Psoas muscle (tissue), 8 donors: ENCODE measurements at regions of chr4 and their contacts with region 1.

Region 1: GRCh38 chr4:187204389-187204918 is 480.8 kb upstream of the FAT1 start:
- DNase-seq: no peak
- ATAC-seq: no peak
- H3K4me3 ChIP-seq: no peak overlapping the region
- H3K27ac ChIP-seq: no peak overlapping the region
- H3K4me1 ChIP-seq: no peaks in the 10 kb centered on the region
- H3K27me3 ChIP-seq: no peaks in the 10 kb centered on the region
- CTCF ChIP-seq: no peak

Region 2: DNA sequence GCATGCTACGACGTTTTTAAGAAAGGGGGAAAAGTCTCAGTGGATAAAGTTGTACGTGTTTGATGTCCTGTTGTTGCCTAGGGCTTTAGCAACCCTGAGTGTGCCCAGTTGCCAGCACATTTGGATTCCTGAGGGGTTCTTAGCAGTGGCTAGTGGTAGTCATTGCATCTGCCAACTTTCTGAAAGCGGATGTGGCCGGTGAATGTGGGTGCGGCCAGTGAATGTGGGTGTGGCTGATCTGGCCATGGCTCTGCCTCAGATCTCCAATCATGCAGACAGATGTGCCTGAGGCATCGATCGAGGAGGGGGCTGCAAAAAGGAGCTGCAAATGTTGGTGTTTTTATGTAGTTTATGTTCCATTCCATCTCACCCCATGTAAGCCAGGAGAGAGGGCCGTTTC is 439.3 kb before region 1 on chr4:
- intact Hi-C with region 1: no loop called
- DNase-seq: peak in 1 of 2 donors; percentile 24
- ATAC-seq: no peak
- H3K4me3 ChIP-seq: no peak overlapping the region
- H3K27ac ChIP-seq: no peak overlapping the region
- H3K4me1 ChIP-seq: no peaks in the 10 kb centered on the region
- H3K27me3 ChIP-seq: no peaks in the 10 kb centered on the region
- CTCF ChIP-seq: no peak

Region 3: DNA sequence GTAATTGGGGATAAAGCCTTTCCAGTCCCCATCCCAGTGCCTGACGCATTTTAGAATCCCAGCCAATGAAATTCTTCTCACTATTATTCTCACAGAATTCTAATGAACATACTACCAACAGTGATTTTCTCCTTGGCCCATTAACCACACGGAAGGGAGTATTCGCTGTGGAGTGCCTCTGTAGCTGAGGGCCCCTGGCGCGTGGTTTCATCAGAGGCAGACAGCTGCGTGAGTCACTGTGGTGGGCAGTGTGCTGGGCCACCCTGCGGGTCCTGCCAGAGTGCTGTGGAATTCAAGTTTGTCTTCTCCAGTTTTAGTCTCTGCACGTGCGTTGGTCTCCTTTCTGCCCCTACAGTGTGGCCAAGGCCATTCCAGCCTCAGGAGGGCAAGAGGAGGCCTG is 145.4 kb before region 1 on chr4:
- intact Hi-C with region 1: no loop called
- DNase-seq: no peak
- ATAC-seq: no peak
- H3K4me3 ChIP-seq: no peak overlapping the region
- H3K27ac ChIP-seq: no peak overlapping the region
- H3K4me1 ChIP-seq: no peaks in the 10 kb centered on the region
- H3K27me3 ChIP-seq: no peaks in the 10 kb centered on the region
- CTCF ChIP-seq: no peak

Region 4: DNA sequence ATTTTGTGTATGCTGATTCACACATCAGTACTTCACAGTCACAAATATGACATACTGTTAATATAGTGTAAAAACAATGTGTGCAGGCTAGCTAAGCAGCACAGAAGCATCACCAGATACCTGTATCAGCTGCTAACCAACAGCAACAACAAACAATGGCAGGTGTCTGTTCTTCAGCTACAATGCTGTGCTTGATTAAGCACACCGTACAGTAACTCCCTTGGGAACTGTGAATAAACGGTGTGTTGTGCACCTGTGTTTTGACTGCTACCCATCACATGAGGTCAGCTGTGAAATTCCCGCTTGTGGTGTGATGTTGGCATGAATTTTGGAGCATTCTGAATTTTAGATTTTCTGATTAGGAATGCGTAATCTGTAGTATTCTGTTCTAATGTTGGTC is 101.1 kb before region 1 on chr4:
- intact Hi-C with region 1: no loop called
- DNase-seq: no peak
- ATAC-seq: no peak
- H3K4me3 ChIP-seq: no peak overlapping the region
- H3K27ac ChIP-seq: no peak overlapping the region
- H3K4me1 ChIP-seq: no peaks in the 10 kb centered on the region
- H3K27me3 ChIP-seq: peaks cover 0 to 3% (median 0%) of the 10 kb centered on the region in 3 donors
- CTCF ChIP-seq: no peak

Region 5: DNA sequence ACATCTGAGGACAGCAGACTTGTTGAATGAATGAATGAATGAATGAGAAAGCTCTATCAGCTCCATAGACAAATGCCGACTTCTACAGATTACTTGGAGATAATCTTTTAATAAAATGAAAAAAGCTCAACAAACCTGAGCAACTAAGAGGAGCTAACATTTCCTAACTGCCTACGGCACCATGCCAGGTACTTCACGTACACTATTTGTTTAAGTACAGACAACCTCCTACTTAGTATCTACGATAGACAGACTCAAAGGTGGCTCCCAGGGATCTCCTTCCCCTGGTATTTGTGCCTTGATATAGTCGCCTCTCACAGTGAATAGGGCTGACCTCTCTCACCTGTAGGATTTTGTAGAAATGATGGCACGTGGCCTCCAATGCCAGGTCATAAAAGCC is 68.6 kb before region 1 on chr4:
- intact Hi-C with region 1: loop called in 1 of 2 experiments (anchors 1 kb)
- DNase-seq: no peak
- ATAC-seq: no peak
- H3K4me3 ChIP-seq: no peak overlapping the region
- H3K27ac ChIP-seq: no peak overlapping the region
- H3K4me1 ChIP-seq: no peaks in the 10 kb centered on the region
- H3K27me3 ChIP-seq: no peaks in the 10 kb centered on the region
- CTCF ChIP-seq: no peak